Activated naive CD4-positive, alpha-beta T cell treated with anti-CD3 and anti-CD28 coated beads, Interleukin-2, amount 10 ng/mL, durations not matched to agents 7 days and 5 days (primary cell): ENCODE measurements at regions of chr12 and their contacts with region 1.

Region 1: GRCh38 chr12:24991209-24992049 is 42.5 kb upstream of the BCAT1 start:
- DNase-seq: no peak
- H3K4me3 Mint-ChIP-seq: no peak overlapping the region
- H3K27ac Mint-ChIP-seq: no peak overlapping the region
- H3K4me1 Mint-ChIP-seq: no peaks in the 10 kb centered on the region
- H3K27me3 Mint-ChIP-seq: peaks cover 4% of the 10 kb centered on the region

Region 2: GRCh38 chr12:25052196-25052913 is 60.9 kb after region 1 on chr12:
- CTCF ChIA-PET with region 1: interaction called, 15 read pairs
- DNase-seq: peak; percentile 58
- H3K4me3 Mint-ChIP-seq: peak overlapping the region; percentile 97
- H3K27ac Mint-ChIP-seq: peak overlapping the region; percentile 100
- H3K4me1 Mint-ChIP-seq: peaks cover 44% of the 10 kb centered on the region
- H3K27me3 Mint-ChIP-seq: peaks cover 3% of the 10 kb centered on the region

Region 3: GRCh38 chr12:25119020-25119419 is 127.6 kb after region 1 on chr12:
- CTCF ChIA-PET with region 1: interaction called, 32 read pairs
- DNase-seq: no peak
- H3K4me3 Mint-ChIP-seq: no peak overlapping the region
- H3K27ac Mint-ChIP-seq: no peak overlapping the region
- H3K4me1 Mint-ChIP-seq: no peaks in the 10 kb centered on the region
- H3K27me3 Mint-ChIP-seq: peaks cover 9% of the 10 kb centered on the region

Region 4: DNA sequence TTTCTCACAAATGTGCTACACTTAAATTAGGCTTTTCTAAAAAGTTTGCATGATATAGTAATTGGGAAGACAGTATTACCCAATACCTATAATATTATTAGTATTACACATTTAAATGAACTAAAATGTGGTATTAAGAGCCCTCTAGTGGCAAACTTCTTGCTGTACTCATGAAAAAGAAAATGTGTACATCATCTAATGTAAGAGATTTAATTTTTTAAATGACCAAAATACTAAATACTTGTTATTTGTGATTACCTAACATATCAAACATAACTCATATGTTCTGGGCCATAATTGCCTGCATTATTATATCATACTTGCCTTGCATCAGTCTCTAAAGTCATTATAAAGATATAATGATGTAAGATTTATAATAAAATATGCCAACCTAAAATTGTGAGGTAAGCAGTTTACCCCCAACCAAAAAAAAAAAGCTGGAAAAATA is 139.3 kb after region 1 on chr12:
- CTCF ChIA-PET with region 1: interaction called, 51 read pairs
- DNase-seq: no peak
- H3K4me3 Mint-ChIP-seq: no peak overlapping the region
- H3K27ac Mint-ChIP-seq: no peak overlapping the region
- H3K4me1 Mint-ChIP-seq: no peaks in the 10 kb centered on the region
- H3K27me3 Mint-ChIP-seq: no peaks in the 10 kb centered on the region

Region 5: DNA sequence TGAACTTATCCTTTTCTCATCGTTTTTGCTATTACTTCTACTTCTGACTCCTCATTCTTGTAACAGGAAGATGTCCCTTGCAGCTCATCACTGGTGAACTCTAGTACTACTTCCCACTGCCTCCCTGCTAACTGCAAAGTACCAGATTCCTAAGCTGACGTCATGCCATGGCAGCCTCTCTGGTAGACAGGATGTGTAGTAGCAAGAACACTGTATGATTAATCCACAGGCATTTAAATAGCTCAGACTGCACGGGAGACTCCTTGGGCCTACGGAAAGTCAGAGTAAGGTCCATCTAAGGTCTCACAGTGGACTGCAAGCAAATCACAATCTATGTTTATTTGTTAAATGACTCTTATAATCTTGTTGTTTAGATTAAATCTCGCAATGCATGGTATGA is 160.0 kb after region 1 on chr12:
- CTCF ChIA-PET with region 1: interaction called, 43 read pairs
- DNase-seq: no peak
- H3K4me3 Mint-ChIP-seq: no peak overlapping the region
- H3K27ac Mint-ChIP-seq: no peak overlapping the region
- H3K4me1 Mint-ChIP-seq: peaks cover 6% of the 10 kb centered on the region
- H3K27me3 Mint-ChIP-seq: no peaks in the 10 kb centered on the region